PC-9 (cell line): ENCODE measurements at regions of chr9 and their contacts with region 1.

Region 1: DNA sequence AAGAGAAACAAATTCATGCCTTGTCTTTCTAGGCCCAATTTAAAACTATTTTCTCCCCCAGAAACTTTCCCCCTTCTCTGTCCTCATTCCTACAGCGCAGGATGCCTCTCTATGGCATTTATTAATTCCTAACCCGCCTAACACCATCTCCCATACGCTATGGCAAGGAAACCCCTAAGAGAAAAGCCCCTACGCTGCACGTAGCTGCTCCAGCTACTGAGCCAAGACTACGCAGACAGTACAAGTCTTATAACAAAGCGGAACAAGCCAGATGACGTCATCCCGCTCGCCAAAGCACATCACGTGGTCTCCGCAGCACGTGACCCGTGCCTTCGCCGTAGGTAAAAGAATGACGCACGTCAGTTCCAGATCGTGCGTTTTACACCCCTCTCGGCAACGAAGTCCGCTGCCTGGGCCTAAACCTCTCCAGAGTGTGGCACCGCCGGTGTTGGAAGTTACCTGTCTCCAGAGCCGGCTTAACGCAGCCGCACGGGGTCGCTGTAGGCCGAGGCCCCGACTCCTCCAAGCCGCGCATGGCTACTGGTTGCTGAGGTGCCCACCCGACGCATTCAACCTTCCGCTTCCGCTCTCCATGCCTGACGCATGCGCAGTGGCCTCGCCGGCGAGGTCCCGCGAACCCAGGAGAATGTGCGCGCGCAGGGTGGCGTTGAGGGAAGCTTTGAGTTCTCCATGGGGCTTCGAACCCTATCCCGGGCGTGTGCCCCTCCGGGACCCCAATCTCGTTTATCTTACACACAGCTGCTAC is at the start of gene TRMO:
- DNase-seq: peak; percentile 90 to 97
- H3K4me3 ChIP-seq: peak within 1 kb of the TSS; percentile 66
- H3K27ac ChIP-seq: peak within 1 kb of the TSS; percentile 82
- H3K4me1 ChIP-seq: peaks cover 18% of the 10 kb centered on the region; the same call in 1 of the 2 replicates
- H3K27me3 ChIP-seq: no peaks in the 10 kb centered on the region
- CTCF ChIP-seq: peak; percentile 70
- total RNA-seq, gene TRMO: 12.0 and 15.8 TPM in 2 replicates

Region 2: DNA sequence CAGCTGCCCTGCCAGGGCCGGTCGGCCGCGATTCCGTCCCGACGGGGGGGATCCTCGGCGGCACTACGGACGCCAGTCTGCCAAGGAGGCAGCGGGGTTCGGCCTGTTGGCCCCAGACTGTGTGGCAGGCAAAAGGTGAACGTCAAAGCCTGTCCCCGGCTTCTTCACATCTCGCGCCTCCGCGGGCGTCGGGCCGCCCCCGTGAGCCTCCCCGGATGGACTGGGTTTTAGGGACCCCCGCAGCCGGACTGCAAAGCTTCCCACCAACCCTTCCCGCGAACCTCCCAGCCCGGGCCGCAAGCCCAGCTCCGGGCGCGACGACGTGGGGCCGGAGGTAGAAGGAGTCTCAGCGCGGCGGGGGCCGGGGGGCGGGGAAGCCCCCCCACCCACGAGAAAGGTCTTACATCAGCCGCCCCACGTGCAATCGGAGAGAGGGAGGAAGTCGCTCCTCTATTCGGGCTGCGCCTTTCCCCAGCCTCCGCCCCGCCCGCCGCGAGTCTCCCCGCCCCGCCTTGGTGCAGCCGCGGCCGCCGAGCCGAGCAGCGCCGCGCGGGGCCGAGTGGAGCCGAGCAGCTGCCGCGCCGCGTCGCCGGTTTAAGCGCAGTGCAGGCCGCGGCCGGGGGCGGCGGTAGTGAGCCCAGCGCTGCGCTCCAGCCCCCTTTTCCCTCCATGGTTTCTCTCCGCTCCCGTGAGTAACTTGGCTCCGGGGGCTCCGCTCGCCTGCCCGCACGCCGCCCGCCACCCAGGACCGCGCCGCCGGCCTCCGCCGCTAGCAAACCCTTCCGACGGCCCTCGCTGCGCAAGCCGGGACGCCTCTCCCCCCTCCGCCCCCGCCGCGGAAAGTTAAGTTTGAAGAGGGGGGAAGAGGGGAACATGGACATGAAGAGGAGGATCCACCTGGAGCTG is 60.8 kb after region 1 on chr9 and contains the start of gene ANP32B:
- CTCF ChIA-PET with region 1: interaction called, 3 read pairs
- POLR2A ChIA-PET with region 1: no interaction called
- intact Hi-C with region 1: loop called (anchors 2 kb)
- DNase-seq: peak; percentile 67 to 96
- H3K4me3 ChIP-seq: peak within 1 kb of the TSS; percentile 92
- H3K27ac ChIP-seq: peak within 1 kb of the TSS; percentile 93
- H3K4me1 ChIP-seq: peaks cover 37% of the 10 kb centered on the region
- H3K27me3 ChIP-seq: no peaks in the 10 kb centered on the region
- CTCF ChIP-seq: peak; percentile 56; the same call in 1 of the 2 replicates
- total RNA-seq, gene ANP32B: 280 and 284 TPM in 2 replicates

Region 3: DNA sequence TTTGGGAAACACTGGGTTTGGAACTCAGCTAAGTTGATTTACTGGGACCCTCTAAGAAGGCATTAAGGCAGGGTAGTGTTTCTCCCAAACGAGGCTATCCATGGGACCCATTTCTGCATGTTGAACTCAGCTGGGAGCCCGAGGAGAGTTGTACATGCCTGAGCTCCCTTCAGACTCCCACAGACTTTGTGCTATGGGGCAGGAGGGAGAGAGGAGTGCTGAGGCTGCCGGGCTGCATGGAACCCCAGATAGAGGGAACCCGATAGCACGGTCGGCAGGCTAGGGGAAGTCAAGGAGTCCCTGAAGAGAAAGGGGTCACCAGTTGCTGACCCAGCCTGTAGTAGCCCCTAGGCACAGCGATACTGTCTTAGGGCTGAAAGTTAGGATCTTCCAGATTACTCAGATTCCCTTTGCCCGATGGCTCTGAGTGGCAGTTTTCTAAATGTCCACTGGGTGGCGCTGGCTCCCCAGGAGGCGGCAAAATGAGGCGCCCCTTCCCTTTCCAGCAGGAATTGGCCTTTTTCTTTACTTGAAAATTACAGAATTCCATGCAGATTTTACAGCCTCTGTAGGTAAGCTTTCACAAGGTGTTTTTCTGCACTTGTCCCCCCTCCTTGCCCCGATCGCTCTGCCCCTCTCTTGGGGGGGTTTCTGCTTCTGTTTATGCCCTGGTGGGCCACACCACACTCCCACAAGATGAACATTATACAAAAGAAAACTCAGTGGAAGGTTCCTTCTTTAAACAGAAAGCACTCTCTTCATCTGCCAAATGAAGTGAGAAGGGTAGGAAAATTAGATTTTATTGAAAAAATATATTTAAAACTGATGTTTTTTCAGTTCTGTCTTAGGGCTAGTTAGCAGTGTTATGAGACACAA is 152.2 kb after region 1 on chr9:
- CTCF ChIA-PET with region 1: no interaction called
- POLR2A ChIA-PET with region 1: no interaction called
- intact Hi-C with region 1: loop called (anchors 2 kb)
- DNase-seq: peak; percentile 49 to 79
- H3K4me3 ChIP-seq: no peak overlapping the region
- H3K27ac ChIP-seq: peak overlapping the region; percentile 69
- H3K4me1 ChIP-seq: peaks cover 49% of the 10 kb centered on the region
- H3K27me3 ChIP-seq: no peaks in the 10 kb centered on the region
- CTCF ChIP-seq: peak; percentile 96

Region 4: GRCh38 chr9:98222885-98223640 is 300.9 kb after region 1 on chr9:
- CTCF ChIA-PET with region 1: no interaction called
- POLR2A ChIA-PET with region 1: no interaction called
- intact Hi-C with region 1: loop called (anchors 1 kb)
- DNase-seq: peak; percentile 92 to 98
- H3K4me3 ChIP-seq: no peak overlapping the region
- H3K27ac ChIP-seq: peak overlapping the region; percentile 93
- H3K4me1 ChIP-seq: peaks cover 98% of the 10 kb centered on the region
- H3K27me3 ChIP-seq: no peaks in the 10 kb centered on the region
- CTCF ChIP-seq: no peak

Region 5: GRCh38 chr9:98315551-98316060 is 393.5 kb after region 1 on chr9:
- CTCF ChIA-PET with region 1: no interaction called
- POLR2A ChIA-PET with region 1: no interaction called
- intact Hi-C with region 1: loop called (anchors 2 kb)
- DNase-seq: peak; percentile 68 to 89
- H3K4me3 ChIP-seq: no peak overlapping the region
- H3K27ac ChIP-seq: no peak overlapping the region
- H3K4me1 ChIP-seq: peaks cover 16% of the 10 kb centered on the region
- H3K27me3 ChIP-seq: no peaks in the 10 kb centered on the region
- CTCF ChIP-seq: peak; percentile 98

Region 6: GRCh38 chr9:98445531-98445930 is 523.4 kb after region 1 on chr9:
- CTCF ChIA-PET with region 1: no interaction called
- POLR2A ChIA-PET with region 1: no interaction called
- intact Hi-C with region 1: no loop called
- DNase-seq: no peak
- H3K4me3 ChIP-seq: no peak overlapping the region
- H3K27ac ChIP-seq: no peak overlapping the region
- H3K4me1 ChIP-seq: no peaks in the 10 kb centered on the region
- H3K27me3 ChIP-seq: no peaks in the 10 kb centered on the region
- CTCF ChIP-seq: no peak

Region 7: DNA sequence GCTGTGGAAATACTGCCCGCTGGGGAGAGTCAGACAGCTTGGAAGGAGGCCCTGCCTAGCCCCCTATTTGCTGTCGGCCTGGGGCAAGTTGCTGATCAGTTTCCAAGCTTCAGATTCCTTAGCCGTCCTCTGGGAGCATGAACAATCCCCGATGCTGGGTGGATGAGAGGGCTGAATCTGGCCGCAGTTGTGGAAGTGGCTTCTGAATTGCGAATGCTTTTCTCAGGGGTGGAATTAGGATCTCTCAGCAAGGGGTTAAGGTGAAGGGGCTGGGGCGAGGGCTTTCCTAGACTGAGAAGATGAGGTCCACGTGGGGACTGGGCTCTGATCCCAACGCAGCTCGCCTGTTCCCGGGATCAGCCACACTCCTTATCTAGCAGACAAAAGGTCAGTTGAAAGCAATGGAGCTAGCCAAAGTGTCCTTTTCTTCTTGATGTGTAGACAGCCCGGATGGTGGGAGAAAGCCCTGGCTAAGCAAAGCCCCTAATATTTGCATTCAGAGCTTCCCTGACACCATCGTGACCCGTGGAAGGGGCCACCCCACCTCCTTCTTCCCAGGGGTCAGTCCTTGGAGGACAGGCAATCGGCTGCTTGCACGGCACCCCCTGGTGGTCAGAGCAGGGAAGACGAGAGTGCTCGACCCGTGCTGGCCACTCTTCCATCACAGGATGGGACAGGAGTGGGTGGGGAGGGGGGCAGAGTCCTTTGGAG is 1076.5 kb after region 1 on chr9:
- CTCF ChIA-PET with region 1: no interaction called
- POLR2A ChIA-PET with region 1: no interaction called
- intact Hi-C with region 1: loop called (anchors 2 kb)
- DNase-seq: peak in 1 of 2 experiments; percentile 67
- H3K4me3 ChIP-seq: no peak overlapping the region
- H3K27ac ChIP-seq: no peak overlapping the region
- H3K4me1 ChIP-seq: no peaks in the 10 kb centered on the region
- H3K27me3 ChIP-seq: no peaks in the 10 kb centered on the region
- CTCF ChIP-seq: peak; percentile 88